ENCODE measurements at regions of chr3 and their contacts with region 1.

Region 1: GRCh38 chr3:4633078-4634004 is 140.2 kb downstream of the ITPR1 start:
- DNase-seq: no peak
- H3K4me3 Mint-ChIP-seq: no peak overlapping the region
- H3K27ac Mint-ChIP-seq: no peak overlapping the region
- H3K4me1 Mint-ChIP-seq: peaks cover 8% of the 10 kb centered on the region
- H3K27me3 Mint-ChIP-seq: no peaks in the 10 kb centered on the region

Region 2: DNA sequence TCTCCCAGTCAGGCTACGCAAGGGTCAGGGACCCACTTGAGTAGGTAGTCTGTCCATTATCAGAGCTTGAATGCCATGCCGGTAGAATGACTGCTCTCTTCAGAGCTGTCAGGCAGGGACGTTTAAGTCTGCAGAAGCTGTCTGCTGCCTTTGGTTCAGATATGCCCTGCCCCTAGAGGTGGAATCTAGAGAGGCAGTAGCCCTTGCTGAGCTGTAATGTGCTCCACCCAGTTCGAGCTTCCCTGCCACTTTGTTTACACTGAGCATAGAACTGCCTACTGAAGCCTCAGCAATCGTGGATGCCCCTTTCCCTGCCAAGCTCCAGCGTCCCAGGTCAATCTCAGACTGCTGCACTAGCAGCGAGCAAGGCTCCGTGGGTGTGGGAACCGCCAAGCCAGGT is 387.7 kb before region 1 on chr3:
- intact Hi-C with region 1: no loop called
- DNase-seq: no peak
- H3K4me3 Mint-ChIP-seq: no peak overlapping the region
- H3K27ac Mint-ChIP-seq: no peak overlapping the region
- H3K4me1 Mint-ChIP-seq: no peaks in the 10 kb centered on the region
- H3K27me3 Mint-ChIP-seq: no peaks in the 10 kb centered on the region

Region 3: GRCh38 chr3:4314688-4315087 is 318.7 kb before region 1 on chr3:
- intact Hi-C with region 1: loop called (anchors 10 kb)
- DNase-seq: no peak
- H3K4me3 Mint-ChIP-seq: no peak overlapping the region
- H3K27ac Mint-ChIP-seq: no peak overlapping the region
- H3K4me1 Mint-ChIP-seq: peaks cover 4% of the 10 kb centered on the region
- H3K27me3 Mint-ChIP-seq: no peaks in the 10 kb centered on the region

Region 4: DNA sequence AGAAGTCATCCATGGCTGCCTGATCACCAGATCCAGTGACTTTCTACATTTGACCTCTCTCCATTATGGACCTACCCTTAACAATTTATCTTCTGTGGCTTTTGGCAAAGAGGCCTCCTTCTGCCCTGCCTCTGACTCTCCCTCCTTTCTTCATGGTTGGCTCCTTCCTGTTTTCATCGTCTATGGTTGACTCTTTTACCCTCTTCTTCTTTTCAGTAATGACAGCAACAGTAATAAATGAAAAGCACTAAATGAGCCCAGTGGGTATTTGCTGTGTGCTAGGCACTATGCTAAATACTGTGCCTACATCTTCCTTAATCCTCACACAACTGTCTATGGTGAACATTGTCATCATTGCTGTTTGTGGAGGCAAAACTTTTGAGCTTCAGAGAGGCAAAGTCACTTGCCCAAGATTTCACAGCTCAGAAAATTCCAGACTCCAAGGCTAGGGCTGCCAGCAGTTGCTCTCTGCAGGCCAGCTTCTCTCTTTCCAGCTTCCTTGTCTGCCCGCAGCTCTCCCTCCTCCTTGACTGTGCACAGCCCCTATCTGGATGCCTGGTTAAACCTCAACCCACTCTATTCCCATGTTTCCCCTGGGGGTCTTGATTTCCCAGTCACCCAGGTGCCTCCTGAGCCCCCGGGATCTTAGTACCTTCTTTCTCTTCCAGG is 115.6 kb before region 1 on chr3:
- intact Hi-C with region 1: loop called (anchors 2 kb)
- DNase-seq: no peak
- H3K4me3 Mint-ChIP-seq: no peak overlapping the region
- H3K27ac Mint-ChIP-seq: peak overlapping the region; percentile 56
- H3K4me1 Mint-ChIP-seq: peaks cover 34% of the 10 kb centered on the region
- H3K27me3 Mint-ChIP-seq: no peaks in the 10 kb centered on the region

Region 5: DNA sequence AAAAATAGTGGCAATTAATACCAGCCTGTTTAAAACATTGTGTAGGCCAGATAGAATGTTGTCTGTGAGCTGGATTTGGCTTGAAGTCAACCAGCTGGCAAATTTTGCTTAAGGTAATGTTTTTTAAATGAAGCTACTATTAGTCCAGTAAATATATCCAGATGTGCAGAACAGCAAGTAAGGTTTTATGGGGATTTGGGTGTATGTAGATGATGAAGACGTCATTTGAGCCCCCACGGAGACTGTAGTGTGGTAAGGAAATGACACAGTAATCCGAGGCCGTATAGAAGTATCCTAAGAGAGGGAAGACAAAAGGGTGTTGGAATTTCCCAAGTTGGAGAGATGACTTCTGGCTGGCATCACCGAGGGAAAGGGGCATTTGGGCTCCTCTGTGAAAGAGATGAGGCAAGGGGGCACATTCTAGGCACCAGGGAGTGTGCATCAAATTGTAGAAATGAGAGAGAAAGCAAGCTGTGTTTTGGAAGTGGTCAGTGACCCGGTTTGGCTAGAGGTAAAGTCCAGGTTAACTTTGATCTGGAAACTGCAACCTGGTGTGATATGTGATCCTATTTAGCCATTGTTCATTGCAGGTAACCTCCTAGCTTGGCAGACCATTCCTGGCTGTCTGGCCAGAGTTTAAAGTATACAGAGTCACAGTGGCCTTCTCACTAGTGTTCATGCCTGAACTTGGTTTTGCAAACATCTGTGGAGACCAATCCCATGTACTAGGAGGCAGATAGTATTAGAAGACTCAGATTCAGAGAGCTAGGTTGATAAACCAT is 35.9 kb before region 1 on chr3:
- intact Hi-C with region 1: loop called (anchors 5 kb)
- DNase-seq: no peak
- H3K4me3 Mint-ChIP-seq: no peak overlapping the region
- H3K27ac Mint-ChIP-seq: no peak overlapping the region
- H3K4me1 Mint-ChIP-seq: peaks cover 44% of the 10 kb centered on the region
- H3K27me3 Mint-ChIP-seq: no peaks in the 10 kb centered on the region

Measured in activated T-helper 2 cell treated with anti-CD3 and anti-CD28 coated beads, Interferon-gamma antibody, Interleukin-2, Interleukin-4, amounts not matched to agents 10 μg/mL and 5 μg/mL and 100 μg/mL, durations not matched to agents 14 hours and 24 hours and 36 hours (primary cell).